ENCODE measurements at regions of chr7 and their contacts with region 1.

Region 1: DNA sequence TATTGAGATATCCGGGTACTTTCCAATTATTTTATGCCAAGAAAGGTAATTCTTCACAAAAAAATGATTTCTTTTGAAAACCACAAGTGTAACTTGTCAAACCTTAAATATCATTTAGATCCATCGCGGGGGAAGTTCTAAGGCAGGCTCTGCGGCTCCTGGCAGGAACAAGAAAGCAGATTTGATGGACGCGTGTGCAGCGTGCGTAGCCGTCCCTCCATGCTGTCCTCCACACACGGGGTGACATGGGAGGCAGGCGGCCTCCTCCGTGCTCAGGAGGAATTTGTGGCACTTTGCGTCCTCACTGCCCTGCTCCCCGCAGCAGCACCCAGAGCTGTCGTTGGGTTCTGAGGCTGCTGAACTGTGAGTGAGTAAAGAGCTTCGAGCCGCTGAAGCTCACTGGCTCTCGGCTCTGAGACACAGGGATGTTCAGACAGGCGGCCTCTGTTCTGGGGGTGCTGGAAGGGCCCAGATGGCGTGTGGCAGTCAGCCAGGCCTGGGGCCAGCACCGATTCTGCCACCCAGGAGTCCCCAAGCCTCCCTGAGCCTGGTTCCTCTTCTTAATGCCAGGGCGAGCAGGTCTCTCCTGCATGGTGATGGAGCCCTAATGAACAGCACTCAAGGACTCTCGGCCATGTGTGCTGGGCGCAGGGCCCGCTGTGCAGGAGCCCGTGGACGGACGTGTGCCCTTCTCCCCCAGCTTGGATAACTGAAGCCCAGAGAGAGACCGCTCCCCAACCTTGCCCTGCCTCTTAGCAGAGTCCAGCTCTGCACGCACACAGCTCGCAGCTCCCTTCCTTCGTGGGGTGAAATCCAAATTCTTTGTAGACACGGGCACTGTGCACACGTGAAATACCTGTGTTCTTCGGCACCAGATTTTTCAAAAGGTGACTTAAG is 185.4 kb upstream of the SHH start:
- DNase-seq: peak; percentile 60
- H3K4me3 Mint-ChIP-seq: peak overlapping the region; percentile 56
- H3K27ac Mint-ChIP-seq: no peak overlapping the region
- H3K4me1 Mint-ChIP-seq: peaks cover 28% of the 10 kb centered on the region
- H3K27me3 Mint-ChIP-seq: peaks cover 48% of the 10 kb centered on the region

Region 2: GRCh38 chr7:155269766-155270585 is 727.7 kb before region 1 on chr7:
- intact Hi-C with region 1: no loop called
- DNase-seq: no peak
- H3K4me3 Mint-ChIP-seq: no peak overlapping the region
- H3K27ac Mint-ChIP-seq: peak overlapping the region; percentile 51
- H3K4me1 Mint-ChIP-seq: peaks cover 6% of the 10 kb centered on the region
- H3K27me3 Mint-ChIP-seq: peaks cover 6% of the 10 kb centered on the region

Region 3: GRCh38 chr7:155961241-155962190 is 36.2 kb before region 1 on chr7:
- intact Hi-C with region 1: loop called (anchors 2 kb)
- DNase-seq: no peak
- H3K4me3 Mint-ChIP-seq: no peak overlapping the region
- H3K27ac Mint-ChIP-seq: no peak overlapping the region
- H3K4me1 Mint-ChIP-seq: peaks cover 17% of the 10 kb centered on the region
- H3K27me3 Mint-ChIP-seq: peaks cover 14% of the 10 kb centered on the region